ENCODE measurements at regions of chr3 and their contacts with region 1.

Region 1: DNA sequence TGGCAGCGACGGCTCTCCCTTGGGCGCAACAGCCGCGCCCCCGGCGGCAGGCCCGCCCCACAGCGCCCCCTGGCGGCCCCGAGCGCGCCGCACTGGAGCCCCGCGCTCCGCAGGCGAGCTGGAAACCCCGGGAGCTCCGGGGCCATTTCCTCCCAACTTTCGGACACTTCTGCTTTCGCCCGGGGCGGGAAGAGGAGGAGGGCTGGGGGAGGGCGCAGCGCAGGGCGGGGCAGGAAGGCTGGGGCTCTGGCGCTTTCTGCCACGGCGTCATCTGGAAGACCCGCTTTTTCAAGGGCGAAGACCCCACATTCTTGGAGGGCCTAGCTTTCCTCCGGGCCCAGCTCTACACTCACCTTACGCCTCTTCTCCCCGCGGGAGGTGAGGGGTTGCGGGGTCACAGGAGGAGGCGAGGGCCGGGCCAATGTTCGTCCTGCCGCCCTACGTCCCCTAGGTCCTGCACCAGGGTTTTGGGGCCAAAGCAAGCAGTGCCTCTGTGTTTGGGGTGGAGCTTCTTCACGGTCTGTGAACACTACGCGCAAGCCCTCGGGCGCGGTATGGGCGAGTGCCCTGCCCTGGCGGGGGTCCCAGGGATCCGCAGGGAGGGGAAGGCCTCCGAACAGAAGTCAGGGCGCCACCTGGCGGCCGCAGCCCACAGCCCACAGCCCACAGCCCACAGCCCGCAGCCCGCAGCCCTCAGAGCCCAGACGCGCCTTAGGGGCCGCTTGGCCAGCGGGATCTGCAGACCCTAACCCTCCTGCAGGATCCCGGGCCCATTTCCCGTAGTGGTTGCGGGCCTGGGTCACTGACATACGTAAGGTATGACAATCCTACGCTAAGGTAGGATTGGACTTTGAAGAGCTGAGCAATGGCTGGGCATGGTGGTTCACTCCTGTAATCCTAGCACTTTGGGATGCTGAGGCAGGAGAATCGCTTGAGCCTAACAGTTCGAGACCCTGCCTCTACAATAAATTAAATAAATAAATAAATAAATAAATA is 31.1 kb downstream of the FOXL2 start:
- DNase-seq: peak; percentile 95
- H3K4me3 ChIP-seq: peak overlapping the region; percentile 51 to 75
- H3K27ac ChIP-seq: peak overlapping the region; percentile 92 to 95
- H3K4me1 ChIP-seq: peaks cover 7% of the 10 kb centered on the region
- H3K27me3 ChIP-seq: no peaks in the 10 kb centered on the region
- CTCF ChIP-seq: peak; percentile 92 to 96 (median 95)
- POLR2A ChIP-seq: peak; percentile 28

Region 2: GRCh38 chr3:138673641-138674530 is 241.9 kb before region 1 on chr3:
- intact Hi-C with region 1: no loop called
- DNase-seq: no peak
- H3K4me3 ChIP-seq: no peak overlapping the region
- H3K27ac ChIP-seq: no peak overlapping the region
- H3K4me1 ChIP-seq: no peaks in the 10 kb centered on the region
- H3K27me3 ChIP-seq: no peaks in the 10 kb centered on the region
- CTCF ChIP-seq: no peak
- POLR2A ChIP-seq: no peak

Region 3: DNA sequence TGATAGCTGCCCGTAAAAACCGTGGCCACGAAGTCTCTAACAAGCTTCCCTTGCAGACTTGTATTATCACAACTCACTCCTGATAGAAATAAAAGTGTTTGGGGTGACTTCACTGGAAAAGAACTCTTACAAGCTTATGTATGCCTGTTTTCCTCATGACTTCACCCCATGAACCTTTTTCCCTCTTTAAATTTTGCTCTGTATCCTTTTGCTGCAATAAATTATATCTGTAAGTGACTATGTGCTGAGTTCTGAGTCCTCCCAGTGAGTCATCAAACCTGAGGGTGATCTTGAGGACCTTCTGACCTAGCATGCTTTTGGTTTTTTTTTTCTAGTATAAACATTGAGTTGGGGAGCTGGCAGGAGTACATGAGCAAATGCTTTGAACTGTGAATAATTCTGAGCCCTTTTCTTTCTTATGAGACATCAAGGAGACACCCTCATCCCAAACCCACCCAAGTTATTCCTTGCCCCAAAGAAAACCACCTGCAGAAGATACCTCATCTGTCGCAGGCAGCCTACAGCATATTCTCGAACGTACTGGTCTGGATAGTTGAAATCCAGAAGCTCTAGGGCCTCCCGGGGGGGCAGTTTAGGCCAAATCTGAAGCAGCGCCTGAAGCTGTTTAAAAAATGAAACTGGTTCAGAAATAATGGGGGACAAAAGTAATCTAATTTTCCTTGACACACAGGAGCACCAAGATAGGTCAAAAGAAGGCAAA is 221.4 kb before region 1 on chr3:
- intact Hi-C with region 1: loop called (anchors 2 kb)
- DNase-seq: no peak
- H3K4me3 ChIP-seq: no peak overlapping the region
- H3K27ac ChIP-seq: no peak overlapping the region
- H3K4me1 ChIP-seq: no peaks in the 10 kb centered on the region
- H3K27me3 ChIP-seq: no peaks in the 10 kb centered on the region
- CTCF ChIP-seq: no peak
- POLR2A ChIP-seq: no peak

Region 4: DNA sequence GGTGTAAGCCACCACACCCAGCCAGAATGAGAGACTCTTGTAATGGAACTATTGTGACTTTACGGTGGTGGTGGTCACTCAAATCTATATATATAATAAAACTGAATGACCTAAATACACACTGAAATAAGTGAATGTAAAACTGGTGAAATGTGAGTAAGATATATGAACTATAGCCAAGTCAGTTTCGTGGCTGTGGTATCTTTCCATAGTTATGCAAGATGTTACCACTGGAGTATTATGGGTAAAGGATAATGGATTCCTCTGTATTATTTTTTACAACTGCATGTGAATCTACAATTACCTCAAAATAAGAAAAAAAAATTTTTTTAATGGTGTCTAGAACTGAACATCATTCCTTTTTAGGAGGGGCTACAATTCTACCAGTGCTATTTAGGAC is 103.0 kb before region 1 on chr3:
- intact Hi-C with region 1: no loop called
- DNase-seq: no peak
- H3K4me3 ChIP-seq: no peak overlapping the region
- H3K27ac ChIP-seq: no peak overlapping the region
- H3K4me1 ChIP-seq: no peaks in the 10 kb centered on the region
- H3K27me3 ChIP-seq: no peaks in the 10 kb centered on the region
- CTCF ChIP-seq: no peak
- POLR2A ChIP-seq: no peak

Region 5: GRCh38 chr3:139173372-139174108 is 257.7 kb after region 1 on chr3:
- intact Hi-C with region 1: no loop called
- DNase-seq: no peak
- H3K4me3 ChIP-seq: peak overlapping the region; percentile 12 to 29
- H3K27ac ChIP-seq: peak overlapping the region in 1 of 2 donors; percentile 38
- H3K4me1 ChIP-seq: no peaks in the 10 kb centered on the region
- H3K27me3 ChIP-seq: no peaks in the 10 kb centered on the region
- CTCF ChIP-seq: no peak
- POLR2A ChIP-seq: no peak

Measured in prostate gland (tissue), 2 donors.